ENCODE measurements at regions of chr12 and their contacts with region 1.

Region 1: GRCh38 chr12:14769969-14770495 is 33.2 kb downstream of the WBP11 start:
- DNase-seq: peak; percentile 79 to 89 (median 87)
- ATAC-seq: peak; percentile 66
- H3K4me3 ChIP-seq: peak overlapping the region; percentile 89
- H3K4me3 Mint-ChIP-seq: peak overlapping the region; percentile 91 to 100 (median 98)
- H3K27ac ChIP-seq: peak overlapping the region; percentile 96
- H3K27ac Mint-ChIP-seq: peak overlapping the region; percentile 98 to 100 (median 100)
- H3K4me1 ChIP-seq: peaks cover 11 to 28% of the 10 kb centered on the region in 2 donors
- H3K4me1 Mint-ChIP-seq: peaks cover 29 to 76% (median 57%) of the 10 kb centered on the region in 7 donors
- H3K27me3 ChIP-seq: no peaks in the 10 kb centered on the region
- H3K27me3 Mint-ChIP-seq: peaks cover 0 to 6% (median 0%) of the 10 kb centered on the region in 5 donors

Region 2: DNA sequence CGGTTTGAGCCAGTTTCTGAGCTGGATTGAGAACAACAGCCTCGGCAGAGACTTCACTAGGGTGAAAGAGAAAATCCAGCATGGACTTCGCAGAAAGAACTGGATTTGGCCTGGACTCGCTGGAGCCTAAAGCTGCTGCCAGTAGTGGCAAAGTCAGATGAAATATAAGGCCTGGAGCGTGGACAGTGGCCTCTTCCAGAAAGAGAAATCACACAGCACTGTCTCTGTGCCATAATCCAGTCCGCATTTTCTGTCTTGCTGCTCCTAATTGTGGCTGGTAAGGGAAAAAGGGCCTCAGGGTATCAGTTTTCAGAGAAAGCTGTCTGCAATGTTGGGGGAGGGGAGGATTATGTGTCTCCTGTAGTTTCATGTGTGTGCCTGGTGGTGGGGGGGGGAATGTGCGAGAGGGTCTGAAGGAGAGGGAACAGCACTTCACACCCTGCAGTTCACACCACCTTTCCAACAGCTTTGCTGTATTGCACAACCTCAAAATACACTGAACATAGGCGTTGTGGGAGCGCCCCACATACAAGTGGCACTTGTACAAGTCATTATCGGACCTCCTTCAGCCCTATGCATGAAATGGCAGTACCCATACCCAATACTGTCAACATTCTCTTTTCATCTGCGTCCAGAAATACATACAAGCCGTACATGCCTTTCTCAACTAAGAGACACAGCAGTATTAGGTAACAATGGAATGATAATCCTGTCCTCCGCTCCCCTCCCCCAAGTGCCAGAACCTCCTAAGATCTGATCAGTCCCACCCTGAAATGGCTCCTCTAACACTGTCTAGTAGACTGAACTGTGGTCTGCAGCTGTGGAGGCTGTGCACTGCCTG is 512.1 kb before region 1 on chr12:
- CTCF ChIA-PET with region 1: no interaction called
- POLR2A ChIA-PET with region 1: interaction called, 5 read pairs
- intact Hi-C with region 1: loop called (anchors 1 to 2 kb)
- DNase-seq: peak; percentile 49 to 85 (median 79)
- ATAC-seq: peak; percentile 72
- H3K4me3 ChIP-seq: peak overlapping the region; percentile 31
- H3K4me3 Mint-ChIP-seq: peak overlapping the region; percentile 67 to 81 (median 77)
- H3K27ac ChIP-seq: peak overlapping the region; percentile 65
- H3K27ac Mint-ChIP-seq: peak overlapping the region; percentile 89 to 99 (median 98)
- H3K4me1 ChIP-seq: peaks cover 37 to 38% of the 10 kb centered on the region in 2 donors
- H3K4me1 Mint-ChIP-seq: peaks cover 39 to 66% (median 61%) of the 10 kb centered on the region in 7 donors
- H3K27me3 ChIP-seq: no peaks in the 10 kb centered on the region
- H3K27me3 Mint-ChIP-seq: no peaks in the 10 kb centered on the region

Region 3: GRCh38 chr12:14417715-14418114 is 352.3 kb before region 1 on chr12:
- CTCF ChIA-PET with region 1: no interaction called
- POLR2A ChIA-PET with region 1: interaction called, 6 read pairs
- intact Hi-C with region 1: loop called in 1 of 2 experiments (anchors 1 kb)
- DNase-seq: peak in 8 of 9 donors; percentile 26 to 88 (median 82)
- ATAC-seq: peak; percentile 80
- H3K4me3 ChIP-seq: no peak overlapping the region
- H3K4me3 Mint-ChIP-seq: peak overlapping the region; percentile 73 to 88 (median 83)
- H3K27ac ChIP-seq: peak overlapping the region; percentile 58
- H3K27ac Mint-ChIP-seq: peak overlapping the region; percentile 76 to 94 (median 87)
- H3K4me1 ChIP-seq: peaks cover 37 to 50% of the 10 kb centered on the region in 2 donors
- H3K4me1 Mint-ChIP-seq: peaks cover 40 to 85% (median 76%) of the 10 kb centered on the region in 7 donors
- H3K27me3 ChIP-seq: no peaks in the 10 kb centered on the region
- H3K27me3 Mint-ChIP-seq: no peaks in the 10 kb centered on the region

Region 4: DNA sequence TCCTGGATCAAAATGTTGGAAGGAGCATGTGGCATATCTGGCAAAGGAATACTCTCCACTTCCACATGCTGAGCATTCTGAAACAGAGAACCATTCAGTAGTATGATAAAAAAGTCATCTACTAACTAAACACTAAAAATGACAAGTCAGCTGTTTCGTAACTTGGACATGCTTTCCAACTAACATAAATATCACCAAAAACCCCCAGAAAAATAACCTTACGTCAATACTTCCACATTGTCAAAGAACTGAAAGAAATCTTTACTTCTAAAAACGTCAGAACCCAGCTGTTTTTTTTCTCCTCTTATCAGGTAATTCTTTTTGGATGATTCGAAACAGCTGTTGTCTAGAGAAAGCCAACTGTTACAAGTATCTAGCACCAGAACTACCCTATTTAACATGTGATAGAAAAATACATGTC is 25.0 kb after region 1 on chr12:
- CTCF ChIA-PET with region 1: interaction called, 6 read pairs
- POLR2A ChIA-PET with region 1: interaction called, 316 read pairs
- intact Hi-C with region 1: loop called in 1 of 2 experiments (anchors 2 kb)
- DNase-seq: no peak
- ATAC-seq: no peak
- H3K4me3 ChIP-seq: no peak overlapping the region
- H3K4me3 Mint-ChIP-seq: no peak overlapping the region
- H3K27ac ChIP-seq: no peak overlapping the region
- H3K27ac Mint-ChIP-seq: peak overlapping the region in 2 of 9 donors; percentile 32 to 48
- H3K4me1 ChIP-seq: no peaks in the 10 kb centered on the region
- H3K4me1 Mint-ChIP-seq: peaks cover 0 to 14% (median 9%) of the 10 kb centered on the region in 7 donors
- H3K27me3 ChIP-seq: no peaks in the 10 kb centered on the region
- H3K27me3 Mint-ChIP-seq: no peaks in the 10 kb centered on the region

Region 5: GRCh38 chr12:14828896-14829295 is 58.9 kb after region 1 on chr12:
- CTCF ChIA-PET with region 1: no interaction called
- POLR2A ChIA-PET with region 1: no interaction called
- intact Hi-C with region 1: no loop called
- DNase-seq: no peak
- ATAC-seq: no peak
- H3K4me3 ChIP-seq: no peak overlapping the region
- H3K4me3 Mint-ChIP-seq: no peak overlapping the region
- H3K27ac ChIP-seq: no peak overlapping the region
- H3K27ac Mint-ChIP-seq: no peak overlapping the region
- H3K4me1 ChIP-seq: no peaks in the 10 kb centered on the region
- H3K4me1 Mint-ChIP-seq: no peaks in the 10 kb centered on the region
- H3K27me3 ChIP-seq: no peaks in the 10 kb centered on the region
- H3K27me3 Mint-ChIP-seq: peaks cover 11 to 14% (median 12%) of the 10 kb centered on the region in 5 donors

Region 6: GRCh38 chr12:14954269-14954668 is 184.2 kb after region 1 on chr12:
- CTCF ChIA-PET with region 1: no interaction called
- POLR2A ChIA-PET with region 1: interaction called, 57 read pairs
- intact Hi-C with region 1: loop called (anchors 1 kb)
- DNase-seq: peak in 1 of 9 donors; percentile 41
- ATAC-seq: no peak
- H3K4me3 ChIP-seq: peak overlapping the region; percentile 39
- H3K4me3 Mint-ChIP-seq: peak overlapping the region; percentile 72 to 97 (median 88)
- H3K27ac ChIP-seq: peak overlapping the region; percentile 96
- H3K27ac Mint-ChIP-seq: peak overlapping the region; percentile 92 to 99 (median 97)
- H3K4me1 ChIP-seq: peaks cover 59 to 84% of the 10 kb centered on the region in 2 donors
- H3K4me1 Mint-ChIP-seq: peaks cover 61 to 87% (median 83%) of the 10 kb centered on the region in 7 donors
- H3K27me3 ChIP-seq: no peaks in the 10 kb centered on the region
- H3K27me3 Mint-ChIP-seq: no peaks in the 10 kb centered on the region

Region 7: DNA sequence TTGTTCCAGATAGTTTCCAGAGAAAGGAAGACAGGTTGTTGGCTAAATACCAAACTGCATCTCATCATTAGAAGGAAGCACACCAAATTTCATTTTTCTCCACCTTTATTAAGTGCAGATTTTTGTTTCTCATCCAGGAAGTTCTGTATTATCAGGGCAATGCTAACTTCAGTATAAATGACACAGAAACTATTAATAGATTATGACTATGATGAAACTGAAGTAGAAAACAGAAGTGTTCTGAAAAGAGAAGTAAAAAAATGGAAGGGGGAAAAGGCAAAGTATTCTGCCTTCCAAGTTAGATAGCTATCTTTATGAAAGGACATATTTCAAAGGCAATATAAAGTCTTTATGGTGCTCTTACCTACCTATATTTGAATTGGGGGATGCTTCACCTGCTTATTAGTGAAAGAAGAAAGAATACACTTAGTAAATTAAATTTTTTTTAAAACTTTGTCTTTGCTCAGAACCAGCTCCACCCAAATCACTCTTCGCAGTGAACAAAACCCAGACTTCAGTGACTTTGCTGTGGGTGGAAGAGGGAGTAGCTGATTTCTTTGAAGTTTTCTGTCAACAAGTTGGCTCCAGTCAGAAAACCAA is 776.2 kb after region 1 on chr12:
- CTCF ChIA-PET with region 1: no interaction called
- POLR2A ChIA-PET with region 1: interaction called, 30 read pairs
- intact Hi-C with region 1: loop called in 1 of 2 experiments (anchors 5 kb)
- DNase-seq: peak in 7 of 9 donors; percentile 73 to 89 (median 85)
- ATAC-seq: peak; percentile 93
- H3K4me3 ChIP-seq: no peak overlapping the region
- H3K4me3 Mint-ChIP-seq: peak overlapping the region; percentile 36 to 85 (median 76)
- H3K27ac ChIP-seq: peak overlapping the region; percentile 74
- H3K27ac Mint-ChIP-seq: peak overlapping the region; percentile 95 to 100 (median 98)
- H3K4me1 ChIP-seq: peaks cover 0 to 50% of the 10 kb centered on the region in 2 donors
- H3K4me1 Mint-ChIP-seq: peaks cover 30 to 98% (median 86%) of the 10 kb centered on the region in 7 donors
- H3K27me3 ChIP-seq: peaks cover 0 to under 1% of the 10 kb centered on the region in 2 donors
- H3K27me3 Mint-ChIP-seq: no peaks in the 10 kb centered on the region